ENCODE measurements at regions of chr14 and their contacts with region 1.

Region 1: GRCh38 chr14:102928412-102929240 is 6.2 kb downstream of the AMN start:
- DNase-seq: peak; percentile 71 to 94 (median 84)
- ATAC-seq: peak; percentile 81 to 87
- H3K4me3 Mint-ChIP-seq: peak overlapping the region; percentile 70 to 85 (median 80)
- H3K27ac Mint-ChIP-seq: peak overlapping the region in 5 of 10 donors; percentile 33 to 83 (median 55)
- H3K4me1 Mint-ChIP-seq: peaks cover 0 to 20% (median 11%) of the 10 kb centered on the region in 4 donors
- H3K27me3 Mint-ChIP-seq: peaks cover 4 to 16% (median 10%) of the 10 kb centered on the region in 5 donors

Region 2: DNA sequence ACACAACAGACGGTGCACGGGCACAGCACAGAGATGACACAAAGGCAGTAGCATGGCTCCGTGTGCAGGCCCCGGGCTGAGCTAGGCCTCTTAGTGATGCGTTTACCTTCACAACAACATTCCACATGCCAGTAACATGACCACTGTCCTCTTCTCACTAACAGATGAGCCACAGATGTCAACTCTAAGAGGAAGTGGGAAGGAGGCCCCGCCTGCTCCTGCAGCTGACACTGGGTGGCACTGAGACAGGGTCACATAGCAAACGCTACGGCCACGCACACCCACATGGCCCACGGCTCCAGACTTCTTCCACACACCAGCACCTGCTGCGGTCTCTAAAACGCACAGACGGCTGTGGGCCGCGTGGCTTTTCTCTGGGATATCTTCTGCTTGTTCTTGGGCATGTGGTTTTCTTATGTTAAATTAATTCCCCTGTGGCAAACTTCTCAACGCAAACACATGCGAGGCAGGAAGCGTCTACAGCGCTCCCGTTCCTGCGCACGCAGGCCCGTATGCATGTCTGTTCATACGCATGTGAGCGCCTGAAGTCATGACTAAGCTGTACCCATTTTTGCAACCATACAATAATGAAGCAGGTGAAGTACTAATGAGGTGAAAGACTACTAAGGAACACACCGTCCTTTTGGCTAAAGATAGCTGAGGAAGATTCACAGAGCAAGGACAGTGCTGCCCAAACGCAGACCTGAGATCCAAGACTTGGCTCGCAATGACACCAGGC is 20.6 kb after region 1 on chr14:
- POLR2A ChIA-PET with region 1: interaction called, 14 read pairs
- DNase-seq: peak in 8 of 10 donors; percentile 29 to 79 (median 56)
- ATAC-seq: peak; percentile 85 to 86
- H3K4me3 Mint-ChIP-seq: peak overlapping the region; percentile 30 to 76 (median 60)
- H3K27ac Mint-ChIP-seq: peak overlapping the region; percentile 79 to 95 (median 88)
- H3K4me1 Mint-ChIP-seq: peaks cover 15 to 32% (median 26%) of the 10 kb centered on the region in 4 donors
- H3K27me3 Mint-ChIP-seq: no peaks in the 10 kb centered on the region

Measured in naive thymus-derived CD8-positive, alpha-beta T cell (primary cell).